ENCODE measurements at regions of chr11 and their contacts with region 1.

Region 1: DNA sequence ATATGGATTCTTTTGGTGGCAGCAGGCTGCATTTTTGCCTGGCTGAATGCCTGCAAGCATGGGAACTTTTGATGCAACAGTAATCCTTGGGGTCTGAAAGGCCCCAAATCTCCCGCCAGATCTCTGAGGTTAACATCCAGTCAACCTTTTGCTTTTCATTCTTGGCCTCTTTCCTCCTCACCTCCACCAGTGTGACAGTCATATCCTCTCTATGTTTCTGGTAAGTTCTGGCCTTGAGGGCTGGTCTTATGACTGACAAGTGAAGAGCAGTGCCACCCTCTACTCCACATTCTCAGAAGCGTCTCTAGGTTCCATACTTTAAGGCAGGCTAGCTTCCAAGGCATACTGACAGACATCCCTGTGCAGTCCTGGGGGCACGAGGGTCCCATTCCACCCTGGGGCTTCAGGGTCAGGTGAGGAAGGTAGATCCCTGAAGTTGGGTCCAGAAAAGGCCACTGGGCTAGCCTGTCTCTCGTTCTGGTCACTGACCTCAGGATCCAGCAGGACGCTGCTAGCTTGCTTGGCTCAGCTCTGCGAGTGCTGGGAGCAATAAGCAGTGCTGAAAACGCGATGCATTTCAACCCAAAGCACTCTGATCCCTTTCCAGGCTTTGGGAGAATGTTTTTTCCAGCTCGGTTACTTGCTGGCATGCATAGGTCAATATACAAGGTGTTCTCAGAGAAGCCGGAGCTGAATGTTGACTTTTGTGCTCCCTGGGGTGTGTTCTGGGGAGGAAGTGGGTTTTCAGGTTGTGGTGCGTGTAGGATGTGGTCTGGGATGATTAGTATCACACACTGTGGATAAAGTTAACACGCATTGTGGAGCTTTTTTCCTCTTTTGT is 75.2 kb downstream of the PTPRJ start:
- DNase-seq: peak; percentile 95
- H3K4me3 Mint-ChIP-seq: peak overlapping the region; percentile 44
- H3K27ac Mint-ChIP-seq: peak overlapping the region; percentile 90
- H3K4me1 Mint-ChIP-seq: peaks cover 80% of the 10 kb centered on the region
- H3K27me3 Mint-ChIP-seq: no peaks in the 10 kb centered on the region

Region 2: GRCh38 chr11:47691979-47692378 is 363.5 kb before region 1 on chr11:
- intact Hi-C with region 1: no loop called
- DNase-seq: no peak
- H3K4me3 Mint-ChIP-seq: no peak overlapping the region
- H3K27ac Mint-ChIP-seq: no peak overlapping the region
- H3K4me1 Mint-ChIP-seq: peaks cover 4% of the 10 kb centered on the region
- H3K27me3 Mint-ChIP-seq: no peaks in the 10 kb centered on the region

Region 3: GRCh38 chr11:47980245-47981049 is 75.1 kb before region 1 on chr11 and contains the start of gene PTPRJ:
- intact Hi-C with region 1: loop called (anchors 2 kb)
- DNase-seq: peak; percentile 90
- H3K4me3 Mint-ChIP-seq: peak within 1 kb of the TSS; percentile 87
- H3K27ac Mint-ChIP-seq: peak within 1 kb of the TSS; percentile 72
- H3K4me1 Mint-ChIP-seq: peaks cover 24% of the 10 kb centered on the region
- H3K27me3 Mint-ChIP-seq: peaks cover 14% of the 10 kb centered on the region
- total RNA-seq, gene PTPRJ: 51.3 and 52.2 TPM in 2 replicates

Region 4: DNA sequence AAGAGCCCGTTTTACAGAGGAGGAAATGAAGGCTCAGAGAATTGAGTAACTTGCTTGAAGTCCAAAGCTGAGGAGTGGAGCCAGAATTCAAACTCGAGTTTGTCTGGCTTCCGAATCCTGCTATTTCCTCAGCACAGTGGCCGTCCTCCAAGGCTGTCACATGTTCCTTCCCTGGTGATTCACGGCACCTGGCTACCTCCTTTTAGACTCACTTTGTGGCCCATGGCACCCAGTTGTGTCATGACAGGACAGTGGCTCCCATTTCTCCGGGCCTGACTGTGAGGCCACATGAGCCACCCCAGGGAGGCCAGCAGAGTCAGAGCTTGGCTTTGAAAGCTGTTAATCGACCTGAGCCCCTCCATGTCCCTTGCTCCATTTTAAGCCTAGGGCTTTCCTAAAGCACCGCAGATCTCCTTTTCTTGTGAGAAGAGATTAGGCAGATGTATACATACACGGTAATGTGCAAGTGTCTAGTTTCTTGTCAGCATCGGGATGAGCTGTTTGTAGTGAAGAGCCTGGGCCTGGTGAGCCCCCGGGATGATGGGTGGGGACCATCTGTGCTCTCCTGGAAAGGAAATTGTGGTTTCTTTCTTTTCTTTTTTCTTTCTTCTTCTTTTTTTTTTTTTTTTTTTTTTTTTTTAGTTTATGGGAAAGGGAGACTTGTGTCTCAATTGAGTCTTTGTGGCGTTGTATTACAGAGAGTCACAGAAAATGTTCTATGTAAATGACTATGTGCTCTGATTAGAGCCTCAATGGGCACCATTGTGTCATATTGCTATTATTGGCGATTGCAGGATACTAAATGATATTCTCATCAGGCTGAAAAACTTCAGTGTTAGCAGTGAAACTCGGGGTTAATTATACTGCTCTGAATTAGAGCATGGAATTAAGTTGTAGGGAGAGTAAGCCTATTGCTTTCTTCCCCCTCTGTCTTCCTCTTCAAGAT is 20.3 kb before region 1 on chr11:
- intact Hi-C with region 1: loop called (anchors 2 kb)
- DNase-seq: no peak
- H3K4me3 Mint-ChIP-seq: peak overlapping the region; percentile 52
- H3K27ac Mint-ChIP-seq: peak overlapping the region; percentile 69
- H3K4me1 Mint-ChIP-seq: peaks cover 67% of the 10 kb centered on the region
- H3K27me3 Mint-ChIP-seq: no peaks in the 10 kb centered on the region

Region 5: DNA sequence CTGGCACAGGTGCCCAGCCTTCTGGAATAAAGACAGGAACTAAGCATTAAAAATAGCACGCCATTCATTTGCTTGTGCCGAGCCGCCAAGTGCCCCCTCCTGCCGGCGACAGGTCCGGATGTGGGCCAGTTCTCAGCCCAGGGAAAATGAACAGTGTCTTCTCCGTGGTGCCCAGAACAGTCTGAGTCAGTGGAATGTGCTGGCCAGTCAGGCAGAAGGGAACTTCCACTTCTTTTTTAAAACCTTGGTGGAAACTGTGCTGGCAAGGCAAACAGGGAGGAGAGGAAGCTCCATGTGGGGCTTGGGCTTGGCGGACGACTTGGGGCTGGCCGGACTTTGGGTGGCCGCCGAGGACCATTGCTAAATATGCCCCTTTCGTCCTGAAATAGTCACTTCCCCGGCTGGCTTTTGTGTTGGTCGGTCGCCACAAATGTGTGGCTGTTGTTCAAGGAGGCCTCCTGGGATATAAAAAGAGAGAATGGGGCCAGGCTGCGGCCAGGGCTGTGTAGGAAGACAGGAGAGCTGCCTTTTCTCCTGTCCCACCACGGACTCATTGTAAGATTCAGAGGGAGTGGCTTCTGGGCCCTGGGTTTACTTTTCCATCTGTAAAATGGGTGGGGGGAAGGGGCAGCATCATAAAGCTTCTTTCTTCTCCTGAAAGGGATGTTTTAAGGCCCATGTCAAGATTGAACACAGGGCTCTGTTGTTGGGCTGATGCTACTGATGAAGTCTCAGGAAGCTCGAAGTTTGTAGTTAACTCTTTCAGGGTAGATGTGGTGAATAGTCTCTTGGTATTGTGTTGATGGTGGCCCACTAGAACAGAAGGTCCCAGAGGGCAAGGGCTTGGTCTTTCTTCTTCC is 25.9 kb after region 1 on chr11:
- intact Hi-C with region 1: loop called (anchors 1 kb)
- DNase-seq: peak; percentile 76
- H3K4me3 Mint-ChIP-seq: peak overlapping the region; percentile 59
- H3K27ac Mint-ChIP-seq: peak overlapping the region; percentile 86
- H3K4me1 Mint-ChIP-seq: peaks cover 51% of the 10 kb centered on the region
- H3K27me3 Mint-ChIP-seq: no peaks in the 10 kb centered on the region

Region 6: GRCh38 chr11:48109046-48109666 is 53.6 kb after region 1 on chr11:
- intact Hi-C with region 1: loop called (anchors 1 kb)
- DNase-seq: no peak
- H3K4me3 Mint-ChIP-seq: peak overlapping the region; percentile 66
- H3K27ac Mint-ChIP-seq: peak overlapping the region; percentile 83
- H3K4me1 Mint-ChIP-seq: peaks cover 53% of the 10 kb centered on the region
- H3K27me3 Mint-ChIP-seq: no peaks in the 10 kb centered on the region

Measured in activated CD4-positive, alpha-beta T cell treated with anti-CD3 and anti-CD28 coated beads, Interleukin-2, amount 10 ng/mL, durations not matched to agents 24 days and 14 days (primary cell).